AG04450 (cell line): ENCODE measurements at regions of chr1 and their contacts with region 1.

Region 1: GRCh38 chr1:165869343-165869742 is 41.9 kb downstream of the UCK2 start:
- DNase-seq: no peak
- H3K4me3 ChIP-seq: no peak overlapping the region
- H3K27ac ChIP-seq: no peak overlapping the region
- H3K27me3 ChIP-seq: no peaks in the 10 kb centered on the region
- CTCF ChIP-seq: peak; percentile 55

Region 2: GRCh38 chr1:165747632-165748447 is 121.5 kb before region 1 on chr1:
- CTCF ChIA-PET with region 1: no interaction called
- POLR2A ChIA-PET with region 1: no interaction called
- DNase-seq: no peak
- H3K4me3 ChIP-seq: no peak overlapping the region
- H3K27ac ChIP-seq: no peak overlapping the region
- H3K27me3 ChIP-seq: no peaks in the 10 kb centered on the region
- CTCF ChIP-seq: no peak

Region 3: DNA sequence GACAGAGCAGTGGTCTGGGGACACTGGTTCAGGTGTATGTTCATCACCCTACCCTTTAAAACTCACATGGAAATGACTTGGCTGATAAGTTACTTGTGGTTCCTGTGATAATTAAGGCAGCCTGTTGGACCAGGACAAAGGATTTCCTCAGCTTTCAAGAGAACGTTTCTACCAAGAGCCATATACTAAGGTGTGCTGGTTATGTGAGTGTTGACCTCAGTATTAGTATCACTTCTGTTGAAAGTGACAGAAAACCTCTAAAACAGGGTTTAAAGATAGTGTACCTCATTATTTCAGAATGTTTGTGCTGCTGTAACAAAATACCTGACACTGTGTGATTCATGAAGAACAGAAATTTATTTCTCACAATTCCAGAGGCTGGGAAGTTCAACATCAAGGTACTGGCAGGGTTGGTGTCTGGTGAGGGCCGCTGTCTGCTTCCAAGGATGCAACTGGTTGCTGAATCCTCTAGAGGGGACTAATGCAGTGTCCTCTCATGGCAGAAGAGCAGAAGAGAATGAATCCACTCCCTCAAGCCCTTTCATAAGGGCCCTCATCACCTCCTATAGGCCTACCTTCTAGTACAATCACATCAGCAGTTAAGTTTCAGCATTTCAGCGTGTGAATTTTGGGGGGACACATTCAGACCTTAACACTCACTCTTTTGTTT is 13.0 kb after region 1 on chr1:
- CTCF ChIA-PET with region 1: interaction called, 6 read pairs
- POLR2A ChIA-PET with region 1: interaction called, 11 read pairs
- DNase-seq: no peak
- H3K4me3 ChIP-seq: no peak overlapping the region
- H3K27ac ChIP-seq: no peak overlapping the region
- H3K27me3 ChIP-seq: no peaks in the 10 kb centered on the region
- CTCF ChIP-seq: no peak

Region 4: DNA sequence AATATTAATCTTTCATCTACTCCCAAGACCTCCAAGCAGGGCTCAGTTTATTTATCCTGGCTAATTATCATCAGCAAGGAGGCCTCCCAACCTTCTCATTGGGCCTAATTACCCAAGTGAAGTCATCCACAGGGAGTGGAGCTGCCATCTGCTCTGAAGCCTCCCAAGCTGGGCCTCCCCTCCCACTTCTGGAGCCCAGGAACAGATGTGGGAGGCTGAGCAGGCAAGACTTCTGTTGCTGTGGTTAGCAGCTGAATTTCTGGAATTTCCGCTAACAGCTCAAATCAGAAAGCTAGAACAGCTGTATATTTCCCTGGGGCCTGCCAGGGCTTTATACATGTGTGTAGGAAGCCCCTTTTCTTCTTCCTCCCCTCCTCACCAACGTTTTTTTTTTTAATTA is 85.6 kb after region 1 on chr1:
- CTCF ChIA-PET with region 1: no interaction called
- POLR2A ChIA-PET with region 1: no interaction called
- DNase-seq: peak; percentile 47
- H3K4me3 ChIP-seq: no peak overlapping the region
- H3K27ac ChIP-seq: no peak overlapping the region
- H3K27me3 ChIP-seq: peaks cover 1% of the 10 kb centered on the region
- CTCF ChIP-seq: no peak